ENCODE measurements at regions of chr2 and their contacts with region 1.

Region 1: DNA sequence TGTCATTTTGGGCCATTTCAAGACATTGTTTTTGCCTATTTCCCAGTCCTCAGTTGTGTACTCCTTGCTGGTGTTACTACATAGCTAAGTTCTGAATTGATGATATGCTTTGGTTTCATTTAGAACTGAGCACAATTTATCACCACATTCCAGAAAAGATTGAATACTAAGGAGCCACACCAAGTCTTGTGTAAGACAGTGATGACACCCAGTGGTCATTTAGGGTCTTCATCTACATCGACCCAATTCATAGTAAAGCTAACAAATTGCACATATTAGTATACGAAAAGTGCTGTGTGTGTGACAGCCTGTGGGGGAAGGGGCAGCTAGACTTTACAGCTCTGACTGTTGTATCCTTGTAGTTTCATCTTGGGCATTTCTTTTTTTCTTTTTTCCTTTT is 10.9 kb upstream of the DLX2 start:
- DNase-seq: peak in 1 of 2 donors; percentile 43
- ATAC-seq: peak in 1 of 3 donors; percentile 42
- H3K4me3 ChIP-seq: no peak overlapping the region
- H3K4me3 Mint-ChIP-seq: no peak overlapping the region
- H3K27ac ChIP-seq: no peak overlapping the region
- H3K27ac Mint-ChIP-seq: no peak overlapping the region
- H3K4me1 ChIP-seq: peaks cover 5% of the 10 kb centered on the region
- H3K4me1 Mint-ChIP-seq: peaks cover 6 to 9% of the 10 kb centered on the region in 2 donors
- H3K27me3 ChIP-seq: peaks cover 14% of the 10 kb centered on the region
- H3K27me3 Mint-ChIP-seq: peaks cover 31 to 41% of the 10 kb centered on the region in 2 donors
- CTCF ChIP-seq: no peak

Region 2: GRCh38 chr2:171811245-171811628 is 302.4 kb before region 1 on chr2:
- intact Hi-C with region 1: loop called (anchors 5 kb)
- DNase-seq: peak in 1 of 2 donors; percentile 46
- ATAC-seq: no peak
- H3K4me3 ChIP-seq: no peak overlapping the region
- H3K4me3 Mint-ChIP-seq: no peak overlapping the region
- H3K27ac ChIP-seq: no peak overlapping the region
- H3K27ac Mint-ChIP-seq: no peak overlapping the region
- H3K4me1 ChIP-seq: no peaks in the 10 kb centered on the region
- H3K4me1 Mint-ChIP-seq: no peaks in the 10 kb centered on the region
- H3K27me3 ChIP-seq: no peaks in the 10 kb centered on the region
- H3K27me3 Mint-ChIP-seq: no peaks in the 10 kb centered on the region
- CTCF ChIP-seq: no peak

Region 3: GRCh38 chr2:172013396-172013795 is 100.2 kb before region 1 on chr2:
- intact Hi-C with region 1: no loop called
- DNase-seq: no peak
- ATAC-seq: no peak
- H3K4me3 ChIP-seq: no peak overlapping the region
- H3K4me3 Mint-ChIP-seq: no peak overlapping the region
- H3K27ac ChIP-seq: no peak overlapping the region
- H3K27ac Mint-ChIP-seq: no peak overlapping the region
- H3K4me1 ChIP-seq: peaks cover 14% of the 10 kb centered on the region
- H3K4me1 Mint-ChIP-seq: peaks cover 26 to 33% of the 10 kb centered on the region in 2 donors
- H3K27me3 ChIP-seq: no peaks in the 10 kb centered on the region
- H3K27me3 Mint-ChIP-seq: no peaks in the 10 kb centered on the region
- CTCF ChIP-seq: no peak

Region 4: DNA sequence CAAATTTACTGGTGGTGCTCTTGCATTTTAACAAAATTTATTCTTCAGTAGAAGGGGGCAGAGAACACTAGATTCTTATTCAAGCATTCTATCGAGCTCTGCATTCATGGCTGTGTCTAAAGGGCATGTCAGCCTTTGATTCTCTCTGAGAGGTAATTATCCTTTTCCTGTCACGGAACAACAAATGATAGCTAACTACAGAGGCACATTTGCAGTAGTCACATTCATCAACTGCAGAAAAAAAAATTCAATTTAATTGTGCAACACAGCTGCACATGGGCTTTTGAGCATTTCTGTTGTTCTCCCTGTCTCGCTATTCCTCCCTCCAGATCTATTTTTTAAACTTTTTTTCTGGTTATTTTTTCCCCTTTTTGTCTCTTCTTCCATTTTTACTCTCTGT is 41.3 kb before region 1 on chr2:
- intact Hi-C with region 1: no loop called
- DNase-seq: no peak
- ATAC-seq: no peak
- H3K4me3 ChIP-seq: no peak overlapping the region
- H3K4me3 Mint-ChIP-seq: no peak overlapping the region
- H3K27ac ChIP-seq: no peak overlapping the region
- H3K27ac Mint-ChIP-seq: no peak overlapping the region
- H3K4me1 ChIP-seq: no peaks in the 10 kb centered on the region
- H3K4me1 Mint-ChIP-seq: no peaks in the 10 kb centered on the region
- H3K27me3 ChIP-seq: peaks cover 12% of the 10 kb centered on the region
- H3K27me3 Mint-ChIP-seq: peaks cover 22 to 60% of the 10 kb centered on the region in 2 donors
- CTCF ChIP-seq: no peak

Region 5: DNA sequence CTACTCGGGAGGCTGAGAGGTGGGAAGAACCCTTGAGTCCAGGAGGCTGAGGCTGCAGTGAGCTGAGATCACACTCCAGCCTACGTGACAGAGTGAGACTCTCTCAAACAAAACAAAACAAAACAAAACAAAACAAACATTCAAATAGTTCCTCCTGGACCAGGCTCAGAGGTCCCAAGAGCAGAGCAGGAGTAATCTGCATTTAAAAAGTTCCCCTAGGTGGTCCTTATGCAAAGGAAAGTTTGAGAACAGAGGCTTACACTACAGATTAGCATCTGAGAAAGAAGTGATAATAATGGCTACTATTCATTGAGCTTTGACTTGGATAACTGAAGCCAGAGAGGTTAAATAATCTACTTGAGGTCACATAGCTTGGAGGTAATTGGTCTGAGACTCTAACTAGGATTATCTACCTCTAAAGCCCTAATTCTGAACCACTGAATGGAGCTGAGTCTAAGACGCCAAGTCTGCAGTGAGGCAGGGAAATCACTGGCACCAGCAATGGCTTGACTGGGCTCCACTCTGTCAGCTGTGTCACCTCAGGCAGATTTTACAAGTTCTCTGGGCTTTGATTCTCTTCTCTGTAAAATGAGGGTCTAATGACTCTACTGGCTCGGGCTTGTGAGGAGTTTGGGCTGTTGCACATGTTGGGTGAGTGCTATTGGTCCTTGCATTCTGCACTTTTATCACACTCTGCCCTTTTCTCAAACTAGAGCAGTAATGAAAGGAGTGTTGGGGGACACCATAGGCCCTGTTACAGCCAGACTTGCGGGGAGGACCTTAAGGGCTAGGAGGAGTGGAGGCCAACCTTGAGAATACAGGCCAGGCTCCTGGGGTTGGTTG is 18.3 kb after region 1 on chr2:
- intact Hi-C with region 1: no loop called
- DNase-seq: no peak
- ATAC-seq: no peak
- H3K4me3 ChIP-seq: no peak overlapping the region
- H3K4me3 Mint-ChIP-seq: no peak overlapping the region
- H3K27ac ChIP-seq: no peak overlapping the region
- H3K27ac Mint-ChIP-seq: no peak overlapping the region
- H3K4me1 ChIP-seq: no peaks in the 10 kb centered on the region
- H3K4me1 Mint-ChIP-seq: no peaks in the 10 kb centered on the region
- H3K27me3 ChIP-seq: no peaks in the 10 kb centered on the region
- H3K27me3 Mint-ChIP-seq: peaks cover 15 to 17% of the 10 kb centered on the region in 2 donors
- CTCF ChIP-seq: no peak

Region 6: DNA sequence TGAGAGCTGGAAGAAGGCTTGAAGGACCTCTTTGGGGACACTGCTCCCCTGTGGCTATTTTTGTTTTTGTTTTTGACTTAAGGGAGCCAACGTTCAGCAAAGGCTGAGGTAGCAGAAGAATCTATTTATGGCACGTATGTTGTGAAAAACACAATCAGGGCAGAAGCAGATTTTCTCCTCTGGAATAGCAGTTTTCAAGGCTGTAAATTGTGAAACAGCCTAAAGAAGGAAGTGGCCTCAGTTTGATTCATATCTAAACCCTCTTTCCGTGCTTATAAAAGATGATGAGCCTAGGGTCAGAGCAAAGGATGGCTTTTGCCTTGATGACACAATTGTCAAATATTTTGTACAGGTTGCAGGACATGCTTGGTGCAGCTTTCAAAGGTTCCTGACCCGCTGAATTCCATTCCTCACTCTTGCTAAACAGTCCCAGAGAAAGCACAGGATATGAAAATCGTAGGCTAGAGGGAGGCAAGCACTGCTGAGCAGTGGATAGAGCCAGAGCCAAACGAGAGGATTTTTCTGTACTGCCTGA is 95.2 kb after region 1 on chr2:
- intact Hi-C with region 1: no loop called
- DNase-seq: no peak
- ATAC-seq: no peak
- H3K4me3 ChIP-seq: no peak overlapping the region
- H3K4me3 Mint-ChIP-seq: no peak overlapping the region
- H3K27ac ChIP-seq: no peak overlapping the region
- H3K27ac Mint-ChIP-seq: no peak overlapping the region
- H3K4me1 ChIP-seq: no peaks in the 10 kb centered on the region
- H3K4me1 Mint-ChIP-seq: no peaks in the 10 kb centered on the region
- H3K27me3 ChIP-seq: no peaks in the 10 kb centered on the region
- H3K27me3 Mint-ChIP-seq: no peaks in the 10 kb centered on the region
- CTCF ChIP-seq: no peak

Measured in natural killer cell (primary cell).